Caco-2 (cell line): ENCODE measurements at regions of chr6 and their contacts with region 1.

Region 1: GRCh38 chr6:8131256-8131897 is 29.0 kb upstream of the EEF1E1 start:
- DNase-seq: peak; percentile 73 to 80
- H3K4me3 ChIP-seq: no peak overlapping the region
- H3K4me3 Mint-ChIP-seq: peak overlapping the region; percentile 46
- H3K27ac Mint-ChIP-seq: peak overlapping the region; percentile 87
- H3K4me1 ChIP-seq: peaks cover 5% of the 10 kb centered on the region; the same call in 1 of the 2 replicates
- H3K4me1 Mint-ChIP-seq: peaks cover 13% of the 10 kb centered on the region
- H3K27me3 ChIP-seq: no peaks in the 10 kb centered on the region
- H3K27me3 Mint-ChIP-seq: no peaks in the 10 kb centered on the region
- CTCF ChIP-seq: peak; percentile 49 to 77

Region 2: DNA sequence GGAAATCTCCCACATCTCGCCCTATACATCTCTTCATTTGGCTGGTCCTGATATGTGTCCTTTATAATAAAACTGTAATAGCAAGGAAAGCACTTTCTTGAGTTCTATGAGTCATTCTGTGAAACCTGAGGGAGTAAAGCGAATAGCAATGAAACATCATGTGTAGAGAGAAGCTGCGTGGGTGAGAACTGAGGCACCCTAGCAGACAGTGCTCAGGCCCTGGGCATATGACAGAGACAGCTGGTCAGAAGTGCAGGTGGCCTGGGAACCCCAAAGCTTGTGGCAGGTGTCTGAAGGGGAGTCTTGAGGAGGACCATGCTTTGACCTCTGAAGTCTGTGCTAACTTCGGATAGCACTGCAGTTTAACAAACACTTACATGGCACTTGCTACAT is 65.9 kb before region 1 on chr6:
- CTCF ChIA-PET with region 1: no interaction called
- POLR2A ChIA-PET with region 1: no interaction called
- intact Hi-C with region 1: no loop called
- DNase-seq: no peak
- H3K4me3 ChIP-seq: no peak overlapping the region
- H3K4me3 Mint-ChIP-seq: peak overlapping the region; percentile 97
- H3K27ac Mint-ChIP-seq: peak overlapping the region; percentile 96
- H3K4me1 ChIP-seq: peaks cover 19% of the 10 kb centered on the region
- H3K4me1 Mint-ChIP-seq: peaks cover 14% of the 10 kb centered on the region
- H3K27me3 ChIP-seq: no peaks in the 10 kb centered on the region
- H3K27me3 Mint-ChIP-seq: no peaks in the 10 kb centered on the region
- CTCF ChIP-seq: no peak

Region 3: DNA sequence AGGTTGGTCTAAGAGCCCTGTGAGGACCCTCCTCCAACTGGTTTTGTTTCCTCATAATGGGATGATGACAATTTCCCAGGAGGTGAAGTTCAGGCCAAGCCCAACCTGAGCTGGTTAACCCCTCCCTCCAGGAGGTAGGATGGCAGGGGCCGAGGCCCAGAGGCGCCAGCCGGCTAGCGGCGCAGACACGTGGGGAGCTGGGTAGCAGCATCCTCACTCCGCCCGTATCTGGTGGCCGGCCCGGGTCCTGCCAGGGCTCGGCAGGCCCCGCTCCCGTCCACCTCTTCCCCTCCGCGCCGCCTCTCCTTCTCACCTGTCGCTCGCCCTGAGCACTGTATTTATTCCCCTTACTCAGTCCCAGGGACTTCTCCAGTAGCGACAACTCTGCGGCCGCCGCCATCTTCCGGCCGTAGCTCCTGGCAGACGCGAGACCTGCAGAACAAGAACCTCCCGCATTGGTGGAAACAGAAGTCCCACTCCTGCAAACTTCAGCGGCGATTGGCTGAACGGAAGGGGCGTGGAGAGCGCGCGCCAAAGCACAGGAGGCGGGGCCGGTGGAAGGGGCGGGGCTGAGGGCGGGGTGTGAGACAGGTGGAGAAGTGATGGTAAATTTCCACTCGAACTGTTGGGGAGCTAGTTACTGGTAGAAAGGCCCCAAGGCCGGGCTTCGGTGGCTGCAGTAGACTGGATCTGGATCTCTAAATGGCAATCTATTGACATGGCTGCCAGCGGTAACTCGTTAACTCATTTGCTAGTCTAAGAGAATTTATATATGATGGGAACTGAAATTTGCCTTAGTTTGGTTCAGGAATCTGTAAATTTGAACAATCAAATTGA is 29.0 kb before region 1 on chr6 and contains the start of gene EEF1E1:
- CTCF ChIA-PET with region 1: interaction called, 10 read pairs
- POLR2A ChIA-PET with region 1: no interaction called
- intact Hi-C with region 1: no loop called
- DNase-seq: peak; percentile 94 to 98
- H3K4me3 ChIP-seq: peak within 1 kb of the TSS; percentile 80
- H3K4me3 Mint-ChIP-seq: peak within 1 kb of the TSS; percentile 88
- H3K27ac Mint-ChIP-seq: peak within 1 kb of the TSS; percentile 89
- H3K4me1 ChIP-seq: peaks cover 8% of the 10 kb centered on the region; the same call in 1 of the 2 replicates
- H3K4me1 Mint-ChIP-seq: no peaks in the 10 kb centered on the region
- H3K27me3 ChIP-seq: no peaks in the 10 kb centered on the region
- H3K27me3 Mint-ChIP-seq: no peaks in the 10 kb centered on the region
- CTCF ChIP-seq: no peak
- total RNA-seq, gene EEF1E1: 60.3 TPM in 2 replicates

Region 4: GRCh38 chr6:8180327-8181159 is 49.2 kb after region 1 on chr6:
- CTCF ChIA-PET with region 1: no interaction called
- POLR2A ChIA-PET with region 1: no interaction called
- intact Hi-C with region 1: no loop called
- DNase-seq: peak; percentile 44 to 50
- H3K4me3 ChIP-seq: no peak overlapping the region
- H3K4me3 Mint-ChIP-seq: no peak overlapping the region
- H3K27ac Mint-ChIP-seq: peak overlapping the region; percentile 51
- H3K4me1 ChIP-seq: peaks cover 42% of the 10 kb centered on the region
- H3K4me1 Mint-ChIP-seq: peaks cover 47% of the 10 kb centered on the region
- H3K27me3 ChIP-seq: no peaks in the 10 kb centered on the region
- H3K27me3 Mint-ChIP-seq: no peaks in the 10 kb centered on the region
- CTCF ChIP-seq: no peak

Region 5: GRCh38 chr6:8219352-8219943 is 88.1 kb after region 1 on chr6:
- CTCF ChIA-PET with region 1: interaction called, 91 read pairs
- POLR2A ChIA-PET with region 1: interaction called, 5 read pairs
- intact Hi-C with region 1: loop called (anchors 1 kb)
- DNase-seq: peak in 1 of 2 experiments; percentile 52
- H3K4me3 ChIP-seq: no peak overlapping the region
- H3K4me3 Mint-ChIP-seq: no peak overlapping the region
- H3K27ac Mint-ChIP-seq: no peak overlapping the region
- H3K4me1 ChIP-seq: peaks cover 18% of the 10 kb centered on the region
- H3K4me1 Mint-ChIP-seq: peaks cover 14% of the 10 kb centered on the region
- H3K27me3 ChIP-seq: no peaks in the 10 kb centered on the region
- H3K27me3 Mint-ChIP-seq: no peaks in the 10 kb centered on the region
- CTCF ChIP-seq: peak; percentile 50 to 71

Region 6: GRCh38 chr6:8446391-8446790 is 315.0 kb after region 1 on chr6:
- CTCF ChIA-PET with region 1: no interaction called
- POLR2A ChIA-PET with region 1: no interaction called
- intact Hi-C with region 1: loop called (anchors 2 kb)
- DNase-seq: peak; percentile 82 to 88
- H3K4me3 ChIP-seq: no peak overlapping the region
- H3K4me3 Mint-ChIP-seq: peak overlapping the region; percentile 83
- H3K27ac Mint-ChIP-seq: peak overlapping the region; percentile 93
- H3K4me1 ChIP-seq: peaks cover 56% of the 10 kb centered on the region
- H3K4me1 Mint-ChIP-seq: peaks cover 44% of the 10 kb centered on the region
- H3K27me3 ChIP-seq: no peaks in the 10 kb centered on the region
- H3K27me3 Mint-ChIP-seq: no peaks in the 10 kb centered on the region
- CTCF ChIP-seq: no peak

Region 7: DNA sequence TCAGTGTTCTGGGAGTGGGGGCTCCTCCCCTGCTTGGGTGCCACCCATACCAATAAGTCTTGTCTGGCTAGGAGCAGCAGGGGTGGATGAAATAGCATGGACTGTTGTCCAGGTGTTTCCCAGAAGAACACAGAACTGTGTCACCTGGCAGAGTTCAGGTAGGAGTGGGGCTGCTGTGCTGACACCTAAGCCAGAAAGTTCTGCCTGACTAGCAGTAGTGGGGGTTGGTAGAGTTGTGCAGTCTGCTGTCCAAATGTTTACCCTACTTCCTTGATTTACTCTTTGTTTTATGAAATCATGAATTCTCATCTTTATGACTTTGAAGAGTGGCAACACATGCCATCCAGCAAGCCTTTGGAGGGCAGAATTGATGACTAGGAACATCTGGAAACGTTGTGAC is 331.3 kb after region 1 on chr6:
- CTCF ChIA-PET with region 1: no interaction called
- POLR2A ChIA-PET with region 1: no interaction called
- intact Hi-C with region 1: no loop called
- DNase-seq: no peak
- H3K4me3 ChIP-seq: no peak overlapping the region
- H3K4me3 Mint-ChIP-seq: no peak overlapping the region
- H3K27ac Mint-ChIP-seq: no peak overlapping the region
- H3K4me1 ChIP-seq: peaks cover 21% of the 10 kb centered on the region
- H3K4me1 Mint-ChIP-seq: peaks cover 25% of the 10 kb centered on the region
- H3K27me3 ChIP-seq: no peaks in the 10 kb centered on the region
- H3K27me3 Mint-ChIP-seq: no peaks in the 10 kb centered on the region
- CTCF ChIP-seq: no peak

Region 8: DNA sequence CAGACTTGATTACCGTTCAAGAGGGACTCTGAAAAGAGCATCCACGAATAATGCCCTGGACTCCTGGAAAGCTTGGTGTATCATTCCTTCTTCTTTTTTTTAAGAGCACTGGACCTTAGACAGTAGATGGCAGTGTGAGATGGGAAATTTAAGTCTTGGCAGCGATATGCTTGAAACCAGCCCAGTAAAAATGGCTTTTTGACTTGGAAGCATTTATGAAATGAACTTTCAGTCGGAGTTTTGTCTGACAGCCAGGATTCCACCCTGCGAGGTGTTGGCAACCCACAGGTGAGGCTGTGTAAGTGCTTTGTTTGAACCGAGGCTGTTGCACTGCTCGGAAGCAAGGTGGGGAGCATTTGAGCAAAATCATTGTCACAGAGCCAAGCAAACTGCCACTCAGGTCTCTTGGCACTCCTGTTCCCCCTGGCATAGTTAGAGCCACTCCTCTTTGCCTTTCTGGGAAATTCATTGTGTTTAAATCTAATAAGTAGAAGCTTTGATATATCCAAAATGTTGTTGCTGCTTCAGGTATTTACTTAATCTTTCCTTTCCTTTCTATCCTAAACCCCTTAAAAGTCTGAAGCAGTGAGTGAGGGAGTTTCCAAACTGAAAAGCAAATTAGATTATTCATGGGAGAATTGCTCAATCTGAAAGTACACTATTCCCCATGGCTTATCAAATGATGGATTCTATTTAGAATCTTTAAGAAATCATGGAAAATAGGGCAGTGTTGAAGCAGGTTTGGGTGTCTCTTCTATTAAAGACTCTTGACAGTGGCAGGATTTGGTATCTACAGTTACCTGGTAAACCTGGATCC is 576.8 kb after region 1 on chr6:
- CTCF ChIA-PET with region 1: interaction called, 5 read pairs
- POLR2A ChIA-PET with region 1: no interaction called
- intact Hi-C with region 1: loop called (anchors 10 kb)
- DNase-seq: peak in 1 of 2 experiments; percentile 53
- H3K4me3 ChIP-seq: no peak overlapping the region
- H3K4me3 Mint-ChIP-seq: peak overlapping the region; percentile 33
- H3K27ac Mint-ChIP-seq: peak overlapping the region; percentile 25
- H3K4me1 ChIP-seq: no peaks in the 10 kb centered on the region
- H3K4me1 Mint-ChIP-seq: peaks cover 10% of the 10 kb centered on the region
- H3K27me3 ChIP-seq: no peaks in the 10 kb centered on the region
- H3K27me3 Mint-ChIP-seq: no peaks in the 10 kb centered on the region
- CTCF ChIP-seq: peak; percentile 50 to 51